Right ventricle myocardium inferior (tissue), 1 donor: ENCODE measurements at regions of chr16 and their contacts with region 1.

Region 1: GRCh38 chr16:589658-590159 is at the start of gene RAB40C:
- DNase-seq: peak; percentile 99
- ATAC-seq: peak; percentile 95
- total RNA-seq, gene RAB40C: 8.8 TPM

Region 2: DNA sequence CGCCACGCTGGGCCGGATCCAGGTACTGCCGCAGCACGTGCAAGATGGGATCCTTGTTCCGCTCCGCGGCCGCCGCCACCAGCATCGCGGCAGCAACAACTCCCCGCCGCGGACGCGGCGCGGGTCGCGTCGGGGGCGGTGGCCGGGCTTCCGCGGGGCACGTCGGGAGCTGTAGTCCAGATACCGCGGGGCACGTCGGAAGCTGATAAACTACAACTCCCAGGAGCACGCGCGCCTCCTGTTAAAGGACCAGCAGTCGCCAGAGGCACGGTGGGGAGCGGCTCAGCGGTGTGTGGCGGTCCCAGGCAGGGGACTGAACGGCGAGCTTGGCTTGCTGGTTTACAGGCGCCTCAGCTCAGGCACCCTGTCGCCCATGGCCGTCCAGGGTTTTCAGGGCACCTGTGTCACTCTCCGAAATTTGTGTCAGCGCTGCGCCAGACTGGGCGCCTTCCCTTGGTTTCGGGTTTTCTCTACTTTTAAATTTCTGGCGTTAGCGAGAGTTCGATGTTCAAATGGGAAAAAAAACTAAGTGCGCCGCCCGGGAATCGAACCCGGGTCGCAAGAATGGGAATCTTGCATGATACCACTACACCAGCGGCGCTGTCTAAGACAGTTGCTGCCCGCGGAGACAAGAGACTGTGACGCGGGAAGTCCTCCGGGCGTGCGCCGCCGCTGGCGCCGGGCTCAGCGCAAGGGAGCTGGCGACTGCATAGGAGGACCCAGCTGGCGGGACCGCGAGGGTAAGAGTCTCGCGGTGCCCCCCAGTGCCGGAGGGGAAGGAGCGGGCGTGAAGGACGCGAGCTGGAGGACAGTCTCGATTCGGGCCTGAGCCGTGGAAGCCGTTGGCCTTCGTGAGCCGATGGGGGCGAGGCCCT is 46.7 kb after region 1 on chr16 and contains the start of gene METTL26:
- intact Hi-C with region 1: loop called (anchors 2 kb)
- DNase-seq: peak; percentile 99
- ATAC-seq: peak; percentile 91
- total RNA-seq, gene METTL26: 53.5 TPM

Region 3: GRCh38 chr16:660459-661183 is 70.9 kb after region 1 on chr16:
- intact Hi-C with region 1: loop called (anchors 5 kb)
- DNase-seq: peak; percentile 96
- ATAC-seq: peak; percentile 89